ENCODE measurements at regions of chr3 and their contacts with region 1.

Region 1: DNA sequence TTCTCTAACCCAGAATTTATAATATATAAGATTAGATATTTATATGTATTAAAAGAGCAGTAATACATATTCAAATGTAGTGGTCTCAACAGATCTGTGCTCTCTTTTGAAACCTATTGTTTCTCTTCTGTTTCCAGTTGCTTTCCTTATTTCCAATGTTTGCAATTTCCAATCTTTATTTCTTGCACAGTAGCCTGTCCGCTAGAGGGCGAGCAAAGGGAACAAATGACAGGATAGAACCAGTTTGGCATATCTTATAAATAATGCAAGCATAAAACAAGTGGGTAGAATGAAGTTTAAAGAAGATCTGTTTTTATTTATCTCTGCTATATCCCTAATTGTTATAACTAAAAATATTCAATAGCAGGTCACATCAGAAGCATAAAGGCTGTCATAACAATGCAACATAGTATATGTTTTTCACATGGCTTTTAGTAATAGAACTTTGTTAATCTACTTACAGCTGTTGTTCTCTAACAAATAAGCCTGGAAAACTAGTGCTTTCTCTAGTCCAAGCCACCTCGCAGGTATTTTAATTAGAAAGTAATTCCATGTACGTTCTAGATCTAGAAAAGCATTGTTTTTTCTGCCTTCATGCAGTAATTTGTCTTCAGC is 15.1 kb upstream of the TCAIM start:
- DNase-seq: peak; percentile 35
- ATAC-seq: no peak
- H3K4me3 ChIP-seq: no peak overlapping the region
- H3K27ac ChIP-seq: no peak overlapping the region
- H3K4me1 ChIP-seq: no peaks in the 10 kb centered on the region
- H3K27me3 ChIP-seq: no peaks in the 10 kb centered on the region
- CTCF ChIP-seq: peak; percentile 73; the same call in 1 of the 2 replicates

Region 2: DNA sequence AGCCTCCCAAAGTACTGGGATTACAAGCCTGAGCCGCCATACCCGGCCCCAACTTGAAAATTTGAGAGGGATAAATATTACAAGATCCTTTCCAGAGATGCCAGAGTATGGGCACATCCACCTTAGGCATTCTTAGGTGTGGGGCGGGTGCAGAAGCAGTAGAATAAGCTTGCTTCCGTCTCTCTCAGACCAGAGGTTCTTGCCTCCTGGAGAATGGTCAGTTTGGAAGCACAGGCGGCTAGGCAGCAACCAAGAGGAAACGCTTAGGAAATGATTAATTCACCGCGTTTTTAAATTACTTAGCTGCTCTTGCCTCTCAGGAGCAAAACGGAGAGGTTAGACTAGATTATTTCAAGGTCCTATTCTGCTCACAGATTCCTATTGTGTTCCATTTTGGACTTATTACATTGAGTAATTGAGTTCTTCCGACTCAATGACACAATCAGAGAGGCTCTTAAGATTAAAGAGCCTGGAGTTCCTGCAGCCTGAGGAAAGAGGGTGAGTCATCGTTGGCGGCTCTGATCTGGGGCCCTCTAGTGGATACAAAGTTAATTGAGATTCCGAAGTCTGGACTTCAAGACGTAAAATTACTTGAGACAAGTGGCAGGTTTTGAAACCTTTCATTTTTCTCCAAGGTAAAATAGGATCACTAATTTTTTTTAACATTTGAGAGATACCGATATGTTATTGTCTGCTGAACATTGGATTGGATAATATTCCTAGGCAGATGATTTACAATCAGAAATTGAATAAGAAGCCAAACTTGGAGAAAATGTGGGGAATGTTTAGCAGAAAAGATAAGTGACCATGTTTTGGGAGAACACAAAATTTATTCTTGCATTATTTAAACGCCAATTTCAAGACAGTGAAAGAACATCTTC is 87.6 kb before region 1 on chr3:
- CTCF ChIA-PET with region 1: no interaction called
- POLR2A ChIA-PET with region 1: no interaction called
- in situ Hi-C with region 1: no loop called
- intact Hi-C with region 1: no loop called
- DNase-seq: peak; percentile 60
- ATAC-seq: peak; percentile 68; the same call in 1 of the 2 replicates
- H3K4me3 ChIP-seq: no peak overlapping the region
- H3K27ac ChIP-seq: no peak overlapping the region
- H3K4me1 ChIP-seq: no peaks in the 10 kb centered on the region
- H3K27me3 ChIP-seq: no peaks in the 10 kb centered on the region
- CTCF ChIP-seq: peak; percentile 80

Region 3: GRCh38 chr3:44477312-44478030 is 154.0 kb after region 1 on chr3 and contains the start of gene ZNF445:
- CTCF ChIA-PET with region 1: no interaction called
- POLR2A ChIA-PET with region 1: no interaction called
- in situ Hi-C with region 1: no loop called
- intact Hi-C with region 1: no loop called
- DNase-seq: peak; percentile 2
- ATAC-seq: peak; percentile 98
- H3K4me3 ChIP-seq: peak within 1 kb of the TSS; percentile 68 to 79
- H3K27ac ChIP-seq: peak within 1 kb of the TSS; percentile 88
- H3K4me1 ChIP-seq: peaks cover 7% of the 10 kb centered on the region
- H3K27me3 ChIP-seq: no peaks in the 10 kb centered on the region
- CTCF ChIP-seq: no peak
- total RNA-seq, gene ZNF445: 11.9 TPM

Region 4: DNA sequence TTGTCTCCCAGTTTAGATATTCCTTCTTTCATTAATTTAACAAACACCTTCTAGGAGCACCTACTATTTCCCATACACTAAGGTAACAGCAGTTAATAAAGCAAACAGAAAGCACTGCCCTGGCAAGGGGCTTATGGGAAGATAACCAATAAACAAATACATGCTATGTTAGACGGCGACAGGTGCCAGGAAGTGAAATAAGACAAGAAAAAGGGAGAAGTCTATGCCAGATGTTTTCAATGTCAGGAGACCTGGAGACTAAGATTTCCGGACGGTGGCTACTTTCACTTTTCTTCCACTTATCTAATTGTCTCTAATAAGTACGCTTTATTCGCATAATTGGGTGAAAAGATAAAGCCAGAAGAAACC is 186.5 kb after region 1 on chr3:
- CTCF ChIA-PET with region 1: no interaction called
- POLR2A ChIA-PET with region 1: no interaction called
- in situ Hi-C with region 1: no loop called
- intact Hi-C with region 1: loop called (anchors 10 kb)
- DNase-seq: no peak
- ATAC-seq: peak; percentile 30
- H3K4me3 ChIP-seq: peak overlapping the region; percentile 82 to 90
- H3K27ac ChIP-seq: peak overlapping the region; percentile 84
- H3K4me1 ChIP-seq: peaks cover 5% of the 10 kb centered on the region; the same call in 1 of the 2 replicates
- H3K27me3 ChIP-seq: no peaks in the 10 kb centered on the region
- CTCF ChIP-seq: no peak